Activated B cell treated with CpG ODN at 0.5 μM for 24 hours (primary cell): ENCODE measurements at regions of chr6 and their contacts with region 1.

Region 1: DNA sequence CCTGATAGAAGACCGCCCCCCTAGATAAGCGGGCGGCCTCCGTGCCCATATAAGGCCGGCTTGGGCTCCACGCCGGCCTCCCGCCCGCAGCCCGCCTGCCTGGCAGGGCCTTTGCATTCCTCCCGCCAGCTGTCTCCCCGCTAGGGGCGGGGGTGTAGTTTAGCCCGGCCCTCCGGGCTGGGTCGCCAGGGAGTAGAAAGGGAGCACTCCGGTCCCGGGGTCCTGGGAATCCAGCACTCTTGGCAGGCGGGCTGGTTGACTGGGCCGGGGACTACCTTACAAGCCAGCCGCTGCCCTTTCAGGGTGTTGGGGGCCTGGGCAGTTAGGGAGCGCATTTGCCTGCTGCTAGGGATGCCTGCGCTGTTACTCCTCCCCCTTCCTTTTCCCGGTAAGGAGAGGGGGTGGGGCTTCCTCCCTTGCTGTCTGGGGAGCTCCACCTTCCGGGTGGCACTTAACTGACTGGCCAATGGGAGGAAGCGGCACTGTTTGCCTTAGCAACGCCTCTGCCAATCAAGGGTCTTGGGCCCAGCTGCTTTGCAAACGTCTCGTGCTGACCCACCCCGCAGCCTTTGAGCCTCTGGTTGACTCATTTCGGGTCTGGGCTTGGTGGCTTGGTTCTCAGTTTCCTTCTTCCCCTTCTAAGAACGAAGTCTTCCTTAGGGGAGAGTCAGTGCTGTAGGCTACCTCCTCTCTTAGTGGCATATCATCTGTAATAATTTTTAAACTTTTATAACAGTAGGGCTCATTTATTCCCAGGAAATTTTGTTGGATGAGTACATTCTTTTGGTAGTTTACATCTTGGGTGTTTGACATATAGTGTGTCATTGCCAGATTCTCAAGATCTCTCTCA is 3.4 kb downstream of the SRF start:
- DNase-seq: peak; percentile 77
- ATAC-seq: peak; percentile 71
- H3K4me3 Mint-ChIP-seq: peak overlapping the region; percentile 73
- H3K27ac Mint-ChIP-seq: peak overlapping the region; percentile 90
- H3K4me1 Mint-ChIP-seq: peaks cover 48% of the 10 kb centered on the region
- H3K27me3 Mint-ChIP-seq: no peaks in the 10 kb centered on the region
- CTCF ChIP-seq: no peak

Region 2: DNA sequence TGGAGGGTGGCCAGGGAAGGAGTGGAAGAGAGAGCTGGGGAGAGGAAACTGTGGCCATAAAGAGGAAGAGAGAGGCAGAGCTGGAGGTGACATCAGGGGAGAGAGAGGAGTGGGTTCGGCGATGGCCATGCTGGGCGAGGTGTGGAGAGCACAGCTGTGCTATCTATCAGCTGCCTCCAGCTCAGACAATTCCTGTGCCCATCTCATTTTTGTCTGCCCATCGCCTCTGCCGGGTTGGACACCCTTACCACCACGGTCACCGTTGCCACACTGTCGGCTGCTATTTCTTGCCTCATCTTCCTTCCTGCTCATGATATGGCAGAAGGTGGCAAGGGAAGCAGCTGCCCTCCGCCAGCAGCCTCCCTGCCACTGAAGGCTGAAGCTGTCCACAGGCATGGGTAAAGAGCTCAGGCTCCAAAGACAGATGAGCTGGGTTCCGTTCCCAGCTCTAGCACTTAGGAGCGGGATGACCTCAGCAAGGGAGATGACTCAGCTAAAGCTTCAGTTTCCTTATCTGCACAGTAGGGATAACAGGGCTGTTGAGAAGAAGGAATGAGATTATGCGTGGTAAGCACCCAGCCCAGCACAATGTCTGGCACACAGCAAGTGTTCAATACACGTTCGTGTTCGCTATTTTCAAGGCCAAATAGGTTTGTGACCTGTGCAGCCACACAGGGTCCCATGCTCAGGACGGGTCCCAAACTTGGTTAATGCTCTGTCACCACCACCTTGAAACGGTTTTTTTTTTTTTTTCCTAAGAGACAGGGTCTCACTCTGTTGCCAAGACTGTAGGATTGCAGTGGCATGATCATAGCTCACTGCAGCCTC is 1146.0 kb before region 1 on chr6:
- CTCF ChIA-PET with region 1: no interaction called
- POLR2A ChIA-PET with region 1: no interaction called
- intact Hi-C with region 1: no loop called
- DNase-seq: no peak
- ATAC-seq: no peak
- H3K4me3 Mint-ChIP-seq: peak overlapping the region; percentile 44
- H3K27ac Mint-ChIP-seq: peak overlapping the region; percentile 99
- H3K4me1 Mint-ChIP-seq: peaks cover 87% of the 10 kb centered on the region
- H3K27me3 Mint-ChIP-seq: no peaks in the 10 kb centered on the region
- CTCF ChIP-seq: no peak

Region 3: DNA sequence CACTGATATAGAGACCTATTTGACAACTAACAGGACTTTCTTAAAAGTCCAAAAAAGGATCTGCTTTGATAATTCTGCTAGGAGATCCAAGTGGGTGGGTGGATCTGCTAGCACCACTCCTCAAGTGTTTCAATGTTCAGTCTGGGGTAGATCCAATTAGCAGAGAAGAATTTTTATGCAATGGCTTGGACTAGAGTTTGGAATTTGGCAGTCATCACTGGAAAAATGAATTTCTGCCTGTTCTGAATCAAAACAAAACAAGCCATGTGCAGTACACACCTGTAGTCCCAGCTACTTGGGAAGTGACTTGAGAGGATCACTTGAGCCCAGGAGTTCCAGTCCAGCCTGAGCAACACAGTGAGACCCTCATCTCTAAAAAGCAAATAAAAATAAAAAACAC is 226.5 kb before region 1 on chr6:
- CTCF ChIA-PET with region 1: no interaction called
- POLR2A ChIA-PET with region 1: interaction called, 10 read pairs
- intact Hi-C with region 1: no loop called
- DNase-seq: no peak
- ATAC-seq: no peak
- H3K4me3 Mint-ChIP-seq: no peak overlapping the region
- H3K27ac Mint-ChIP-seq: no peak overlapping the region
- H3K4me1 Mint-ChIP-seq: peaks cover 2% of the 10 kb centered on the region
- H3K27me3 Mint-ChIP-seq: no peaks in the 10 kb centered on the region
- CTCF ChIP-seq: no peak

Region 4: DNA sequence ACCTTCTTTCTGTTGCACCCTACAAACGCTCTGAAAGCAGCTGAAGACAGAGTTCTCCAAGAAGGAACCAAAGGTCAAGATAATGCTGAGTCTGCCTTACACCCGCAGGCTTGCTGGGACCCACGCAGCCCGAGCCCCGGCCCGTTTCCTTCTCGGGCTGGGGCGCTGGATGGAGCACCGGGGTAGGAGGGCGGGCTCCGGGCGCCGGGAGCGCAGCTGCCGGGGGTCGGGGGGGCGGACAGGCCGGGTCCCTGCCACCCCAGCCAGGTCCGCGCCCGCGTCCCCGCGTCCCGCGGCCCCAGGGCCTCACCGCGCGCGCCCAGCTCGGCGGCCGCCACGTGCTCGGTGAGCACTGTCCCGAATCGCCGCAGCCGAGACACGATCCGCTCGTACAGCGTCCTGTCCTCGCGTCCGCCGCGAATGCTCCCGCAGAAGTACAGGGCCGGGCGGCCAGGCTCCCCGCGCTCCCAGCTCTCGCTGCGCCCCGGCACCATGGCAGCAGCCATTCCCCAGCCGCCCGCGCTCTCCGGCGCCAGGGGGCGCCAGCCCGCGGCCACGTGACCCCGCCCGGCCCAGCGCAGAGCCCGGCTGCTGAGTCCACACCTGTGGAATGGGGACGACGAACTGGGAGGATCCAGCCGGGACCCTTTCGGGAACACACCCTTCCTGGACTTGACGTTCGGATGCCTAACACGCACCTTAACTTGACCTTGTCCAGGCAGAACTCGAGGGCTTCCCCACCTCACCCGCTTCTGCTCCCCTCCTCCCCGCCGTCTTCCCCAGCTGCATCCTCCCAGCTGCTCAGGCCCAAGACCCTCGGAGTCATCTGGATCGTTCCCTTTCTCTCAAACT is 54.7 kb after region 1 on chr6 and contains the start of gene DNPH1:
- CTCF ChIA-PET with region 1: interaction called, 8 read pairs
- POLR2A ChIA-PET with region 1: interaction called, 17 read pairs
- intact Hi-C with region 1: loop called (anchors 1 kb)
- DNase-seq: peak; percentile 87
- ATAC-seq: peak; percentile 69
- H3K4me3 Mint-ChIP-seq: peak within 1 kb of the TSS; percentile 87
- H3K27ac Mint-ChIP-seq: peak within 1 kb of the TSS; percentile 75
- H3K4me1 Mint-ChIP-seq: peaks cover 39% of the 10 kb centered on the region
- H3K27me3 Mint-ChIP-seq: no peaks in the 10 kb centered on the region
- CTCF ChIP-seq: peak; percentile 57
- total RNA-seq, gene DNPH1: 56.7 and 57.5 TPM in 2 replicates

Region 5: GRCh38 chr6:43427406-43428111 is 253.1 kb after region 1 on chr6 and contains the start of gene ABCC10:
- CTCF ChIA-PET with region 1: no interaction called
- POLR2A ChIA-PET with region 1: interaction called, 3 read pairs
- intact Hi-C with region 1: loop called (anchors 2 kb)
- DNase-seq: peak; percentile 90
- ATAC-seq: peak; percentile 93
- H3K4me3 Mint-ChIP-seq: peak within 1 kb of the TSS; percentile 95
- H3K27ac Mint-ChIP-seq: peak within 1 kb of the TSS; percentile 95
- H3K4me1 Mint-ChIP-seq: peaks cover 20% of the 10 kb centered on the region
- H3K27me3 Mint-ChIP-seq: no peaks in the 10 kb centered on the region
- CTCF ChIP-seq: no peak
- total RNA-seq, gene ABCC10: 59.5 and 74.6 TPM in 2 replicates

Region 6: DNA sequence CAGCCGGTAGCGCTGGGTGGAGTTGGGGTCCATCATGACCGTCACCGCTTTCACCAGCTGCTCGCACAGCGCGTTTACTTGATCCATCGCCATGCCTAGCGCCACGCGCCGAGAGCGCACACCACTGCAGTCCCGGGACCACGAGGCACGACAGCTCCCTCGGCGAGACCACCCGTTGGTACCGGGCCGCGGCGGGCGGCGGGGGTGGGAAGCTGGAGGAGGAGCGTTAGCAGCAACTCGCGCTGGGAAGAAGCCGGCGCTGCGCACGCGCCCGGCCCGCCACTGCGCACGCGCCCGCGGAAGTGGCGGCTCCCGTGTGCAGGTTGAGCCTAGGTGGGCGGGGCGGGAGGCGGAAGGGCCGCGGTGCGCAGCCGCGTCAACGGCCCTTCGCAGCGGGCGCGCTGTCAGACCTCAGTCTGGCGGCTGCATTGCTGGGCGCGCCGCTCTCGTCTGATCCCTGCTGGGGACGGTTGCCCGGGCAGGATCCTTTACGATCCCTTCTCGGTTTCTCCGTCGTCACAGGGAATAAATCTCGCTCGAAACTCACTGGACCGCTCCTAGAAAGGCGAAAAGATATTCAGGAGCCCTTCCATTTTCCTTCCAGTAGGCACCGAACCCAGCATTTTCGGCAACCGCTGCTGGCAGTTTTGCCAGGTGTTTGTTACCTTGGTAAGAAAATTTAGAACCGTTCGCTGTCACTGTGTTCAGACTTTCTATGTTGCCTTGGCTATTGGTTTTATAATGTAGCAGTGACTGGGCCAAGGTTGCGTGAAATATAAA is 401.5 kb after region 1 on chr6 and contains the starts of genes POLH and XPO5:
- CTCF ChIA-PET with region 1: no interaction called
- POLR2A ChIA-PET with region 1: no interaction called
- intact Hi-C with region 1: loop called (anchors 2 kb)
- DNase-seq: peak; percentile 91
- ATAC-seq: peak; percentile 94
- H3K4me3 Mint-ChIP-seq: peak within 1 kb of the TSS; percentile 97
- H3K27ac Mint-ChIP-seq: peak within 1 kb of the TSS; percentile 86
- H3K4me1 Mint-ChIP-seq: peaks cover 38% of the 10 kb centered on the region
- H3K27me3 Mint-ChIP-seq: no peaks in the 10 kb centered on the region
- CTCF ChIP-seq: no peak
- total RNA-seq, gene POLH: 23.3 and 26.5 TPM in 2 replicates
- total RNA-seq, gene XPO5: 54.4 and 59.4 TPM in 2 replicates